Left lung (tissue), 14 donors: ENCODE measurements at regions of chr7 and their contacts with region 1.

Region 1: GRCh38 chr7:70156057-70156456 is 557.8 kb downstream of the AUTS2 start:
- DNase-seq: no peak
- ATAC-seq: no peak
- H3K4me3 ChIP-seq: no peak overlapping the region
- H3K27ac ChIP-seq: no peak overlapping the region
- H3K4me1 ChIP-seq: no peaks in the 10 kb centered on the region
- H3K27me3 ChIP-seq: no peaks in the 10 kb centered on the region
- CTCF ChIP-seq: no peak

Region 2: DNA sequence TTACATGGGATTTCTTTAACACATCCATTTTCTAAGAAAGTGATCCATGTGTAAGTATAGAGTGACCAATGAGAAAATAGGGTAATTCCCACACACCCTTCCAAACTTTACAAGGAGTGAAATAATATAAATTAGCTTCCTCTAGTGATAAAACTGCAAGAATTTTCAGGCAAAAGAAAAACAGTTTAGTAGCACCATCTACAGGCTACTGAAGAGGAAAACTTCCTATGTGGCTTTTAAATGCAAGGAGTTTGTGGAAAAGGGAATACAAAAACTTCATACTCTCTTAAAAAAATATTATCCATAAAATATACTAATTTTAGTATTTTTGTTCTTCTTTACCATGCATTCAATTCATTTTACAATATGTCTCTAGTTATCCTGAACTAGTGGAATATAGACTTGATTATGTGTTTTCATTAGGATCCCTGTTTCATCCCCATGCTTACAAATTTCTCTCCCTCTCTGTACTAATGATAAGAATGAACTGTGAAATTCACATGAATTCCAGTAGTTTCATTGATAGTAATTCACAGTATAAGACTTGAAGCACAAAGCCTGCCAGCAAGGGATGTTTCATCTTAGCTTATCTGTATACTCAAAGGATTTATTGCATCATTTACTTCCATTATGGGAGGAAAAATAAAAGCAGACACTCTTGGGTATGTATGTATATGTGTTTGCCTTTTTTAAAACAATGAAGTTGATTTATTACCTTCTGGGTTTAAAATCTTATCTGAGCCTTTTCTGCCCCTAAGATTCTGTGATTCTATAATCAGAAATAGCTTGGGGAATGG is 114.9 kb before region 1 on chr7:
- intact Hi-C with region 1: loop called in 1 of 2 experiments (anchors 5 kb)
- DNase-seq: peak in 1 of 4 donors; percentile 44
- ATAC-seq: peak; percentile 54
- H3K4me3 ChIP-seq: no peak overlapping the region
- H3K27ac ChIP-seq: no peak overlapping the region
- H3K4me1 ChIP-seq: no peaks in the 10 kb centered on the region
- H3K27me3 ChIP-seq: no peaks in the 10 kb centered on the region
- CTCF ChIP-seq: peak; percentile 7 to 34